GM10248 (cell line): ENCODE measurements at regions of chrX and their contacts with region 1.

Region 1: DNA sequence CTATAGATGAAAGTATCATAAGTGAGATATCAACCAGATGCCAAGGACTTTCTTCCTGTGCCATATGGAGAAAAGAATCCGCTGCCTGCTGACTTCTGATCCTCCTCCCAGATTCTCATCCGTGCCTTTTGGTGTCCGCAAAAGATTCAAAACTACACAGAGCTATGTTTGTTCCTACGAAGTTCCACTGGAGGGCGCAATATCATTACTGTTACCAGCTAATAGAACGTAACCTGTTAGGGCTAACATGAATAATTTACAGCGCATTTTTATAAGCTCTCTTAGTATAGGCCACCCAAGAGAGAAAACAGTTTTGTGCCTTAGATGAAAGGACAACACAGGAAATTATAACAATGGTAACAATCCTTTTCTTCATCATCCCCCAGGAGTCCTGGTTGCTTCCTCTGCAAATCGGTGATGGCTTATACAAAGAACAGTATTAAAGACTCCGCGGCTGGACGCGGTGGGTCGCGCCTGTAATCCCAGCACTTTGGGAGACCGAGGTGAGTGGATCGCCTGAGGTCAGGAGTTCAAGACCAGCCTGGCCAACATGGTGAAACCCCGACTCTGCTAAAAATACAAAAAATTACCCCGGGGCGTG is 22.8 kb upstream of the CENPVL3 start:
- DNase-seq: peak; percentile 41
- CTCF ChIP-seq: peak; percentile 32

Region 2: DNA sequence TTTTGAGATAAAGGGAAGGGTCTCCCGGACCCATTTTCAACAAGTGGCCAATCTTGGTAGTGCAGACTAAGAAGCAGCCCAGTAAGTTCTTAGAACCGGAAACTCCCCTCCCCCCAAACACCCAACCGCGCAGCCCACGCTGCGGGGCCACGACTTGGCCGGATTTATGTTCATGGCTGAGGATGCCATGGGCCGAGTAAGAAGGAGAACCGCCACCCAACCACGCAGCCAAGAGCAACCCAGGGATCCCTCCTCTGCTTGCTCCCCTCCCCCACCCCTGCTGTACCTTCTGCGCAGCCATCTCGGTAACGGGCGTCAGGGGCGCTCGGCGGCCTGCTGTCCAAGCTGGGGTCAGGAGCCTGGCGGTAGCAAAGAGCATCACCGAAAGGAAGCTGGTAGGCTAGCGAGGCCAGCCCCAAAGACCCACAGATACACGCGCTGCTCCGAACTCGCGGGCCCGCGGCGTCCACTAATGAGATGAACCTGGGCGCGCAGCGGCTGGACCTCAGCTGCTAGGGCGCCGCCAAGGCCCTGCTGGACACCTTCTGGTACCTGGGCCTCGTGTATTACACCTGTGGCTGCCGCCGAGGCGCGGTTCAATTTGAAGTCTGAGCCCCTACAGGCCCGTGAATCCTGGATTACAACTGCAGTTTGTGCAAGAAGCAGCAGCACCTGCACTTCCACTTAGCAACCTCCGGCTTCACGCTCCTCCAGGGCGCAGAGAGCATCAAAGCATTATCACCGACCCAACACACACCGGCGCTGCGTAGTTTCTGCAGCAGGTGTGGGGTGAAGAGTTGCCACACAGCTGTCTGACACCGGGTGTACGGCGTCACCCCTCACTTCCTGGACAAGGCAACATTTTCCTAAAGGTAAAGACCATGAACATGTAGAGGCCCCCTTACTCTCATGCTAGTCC is 245.5 kb before region 1 on chrX:
- CTCF ChIA-PET with region 1: no interaction called
- POLR2A ChIA-PET with region 1: no interaction called
- DNase-seq: no peak
- CTCF ChIP-seq: no peak

Region 3: DNA sequence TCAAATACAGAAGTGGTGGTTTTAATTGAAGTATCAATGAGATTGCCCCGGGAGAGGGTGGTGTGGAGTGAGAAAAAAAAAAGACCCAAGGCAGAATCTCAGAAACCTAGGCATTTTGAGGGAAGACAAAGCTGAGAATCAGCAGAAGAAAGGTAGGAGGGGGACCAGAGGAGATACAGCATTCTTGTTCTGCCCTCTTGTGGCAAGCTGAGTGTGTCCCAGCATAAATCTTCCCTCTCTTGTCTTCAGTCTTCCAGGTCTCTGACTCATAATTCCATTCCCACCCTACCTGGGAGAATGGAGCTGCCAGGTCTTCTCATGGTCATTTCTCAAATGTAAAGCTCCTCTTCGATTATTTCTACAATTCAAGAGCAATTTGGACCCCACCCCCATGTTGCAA is 219.2 kb after region 1 on chrX:
- CTCF ChIA-PET with region 1: interaction called, 11 read pairs
- POLR2A ChIA-PET with region 1: no interaction called
- DNase-seq: peak; percentile 6
- CTCF ChIP-seq: peak; percentile 30